PC-9 (cell line): ENCODE measurements at regions of chr9 and their contacts with region 1.

Region 1: DNA sequence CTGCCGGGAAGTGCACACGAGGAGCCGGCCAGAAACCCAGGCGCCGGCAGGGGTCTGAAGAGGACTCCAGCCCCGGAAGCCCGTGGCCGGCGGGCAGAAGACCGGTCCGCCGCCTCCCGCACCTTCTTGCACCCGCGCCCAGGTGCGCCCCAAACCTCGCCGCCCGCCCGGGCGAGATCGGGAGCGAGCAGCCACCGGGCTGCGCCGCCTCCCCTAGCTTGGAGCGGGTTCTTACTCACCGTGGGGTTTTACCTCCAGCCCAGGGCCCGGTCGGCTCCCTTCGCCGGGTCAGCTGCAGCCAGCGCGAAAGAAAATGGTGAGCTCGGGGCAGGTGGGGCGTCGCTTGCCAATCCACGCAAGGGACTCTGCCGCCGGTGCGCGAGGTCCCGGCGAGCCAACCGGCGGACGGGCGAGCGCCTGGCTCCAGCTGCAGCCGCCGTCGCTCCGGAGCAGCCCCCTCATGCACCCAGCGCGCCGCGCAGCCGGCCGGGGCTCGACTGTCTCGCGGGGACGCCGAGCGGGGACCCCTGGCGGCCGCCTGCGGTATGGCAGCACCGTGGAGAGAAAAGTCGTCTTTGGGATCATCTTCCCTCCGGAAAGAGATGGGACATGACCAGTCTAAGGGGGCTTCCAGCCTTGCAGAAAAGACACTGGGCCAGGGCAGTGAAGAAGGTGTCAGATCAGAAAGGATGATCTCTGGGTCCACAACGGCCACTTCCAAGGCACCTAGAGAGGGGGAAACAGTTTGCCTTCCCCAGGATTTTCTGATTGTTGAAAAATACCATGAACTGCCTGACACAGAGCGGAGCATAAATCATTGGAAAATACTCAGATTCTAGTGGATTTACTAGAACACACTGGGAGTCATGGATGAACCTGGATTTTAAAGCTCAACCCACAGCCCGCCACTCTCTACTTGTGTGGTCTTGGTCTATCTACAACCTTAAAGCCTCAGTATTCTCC is at the start of gene MOB3B:
- DNase-seq: peak in 1 of 2 experiments; percentile 72
- H3K4me3 ChIP-seq: peak within 1 kb of the TSS; percentile 75
- H3K27ac ChIP-seq: no peak within 1 kb of the TSS
- H3K4me1 ChIP-seq: 0 out of 2 replicates have a peak, but pooled peaks cover 2% of the 10 kb centered on the region
- H3K27me3 ChIP-seq: 0 out of 2 replicates have a peak, but pooled peaks cover 3% of the 10 kb centered on the region
- CTCF ChIP-seq: peak; percentile 79
- total RNA-seq, gene MOB3B: 2.7 and 4.4 TPM in 2 replicates

Region 2: DNA sequence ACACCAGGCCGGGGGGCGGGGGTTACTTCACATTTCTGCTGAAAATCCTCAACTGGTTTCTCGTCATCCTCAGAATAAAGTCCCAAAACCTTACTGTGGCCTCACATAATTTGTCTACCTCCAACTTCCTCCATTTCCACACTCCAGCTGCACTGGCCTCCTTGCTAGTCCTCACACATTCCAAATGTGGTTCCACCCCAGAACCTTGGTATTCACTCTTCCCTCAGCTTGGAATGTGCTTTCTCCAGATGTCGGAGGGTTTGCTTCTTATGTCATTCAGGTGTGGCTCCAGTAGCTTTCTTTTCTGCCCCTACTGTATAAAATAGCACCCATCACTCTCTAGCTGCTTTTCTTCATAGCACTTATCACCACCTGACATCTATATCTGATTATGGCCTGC is 108.0 kb before region 1 on chr9:
- CTCF ChIA-PET with region 1: no interaction called
- POLR2A ChIA-PET with region 1: no interaction called
- intact Hi-C with region 1: loop called (anchors 1 kb)
- DNase-seq: peak in 1 of 2 experiments; percentile 41
- H3K4me3 ChIP-seq: no peak overlapping the region
- H3K27ac ChIP-seq: no peak overlapping the region
- H3K4me1 ChIP-seq: peaks cover 6% of the 10 kb centered on the region
- H3K27me3 ChIP-seq: no peaks in the 10 kb centered on the region
- CTCF ChIP-seq: no peak

Region 3: DNA sequence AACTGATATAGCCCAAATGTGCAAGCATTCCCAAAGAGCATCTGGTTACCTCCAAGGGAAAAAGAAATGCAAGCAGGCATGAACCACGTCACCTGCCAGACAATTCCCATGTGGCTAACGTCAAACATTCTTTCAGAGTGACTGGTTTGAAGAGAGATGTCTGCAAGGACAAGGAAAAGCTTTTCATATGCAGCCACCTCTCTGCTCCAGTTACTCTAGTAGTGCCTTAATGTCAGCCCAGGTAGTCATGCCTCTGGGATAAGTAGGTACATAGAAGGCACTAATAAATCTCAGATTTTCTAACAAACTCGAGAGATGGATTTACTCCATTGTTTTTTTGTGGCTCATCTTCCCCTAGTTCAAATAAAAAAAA is 102.3 kb before region 1 on chr9:
- CTCF ChIA-PET with region 1: no interaction called
- POLR2A ChIA-PET with region 1: no interaction called
- intact Hi-C with region 1: loop called (anchors 2 kb)
- DNase-seq: peak; percentile 55 to 78
- H3K4me3 ChIP-seq: no peak overlapping the region
- H3K27ac ChIP-seq: peak overlapping the region; percentile 47
- H3K4me1 ChIP-seq: peaks cover 44% of the 10 kb centered on the region
- H3K27me3 ChIP-seq: no peaks in the 10 kb centered on the region
- CTCF ChIP-seq: no peak